ENCODE measurements at regions of chr14 and their contacts with region 1.

Region 1: GRCh38 chr14:59632381-59632780 is 55.8 kb upstream of the CCDC175 start:
- DNase-seq: no peak
- ATAC-seq: no peak
- H3K4me3 ChIP-seq: no peak overlapping the region
- H3K27ac ChIP-seq: no peak overlapping the region
- H3K4me1 ChIP-seq: peaks cover 0 to 3% of the 10 kb centered on the region in 2 donors
- H3K27me3 ChIP-seq: no peaks in the 10 kb centered on the region

Region 2: GRCh38 chr14:59688224-59689170 is 56.1 kb after region 1 on chr14:
- intact Hi-C with region 1: loop called (anchors 2 to 5 kb)
- DNase-seq: peak in 1 of 2 donors; percentile 75
- ATAC-seq: peak; percentile 75
- H3K4me3 ChIP-seq: no peak overlapping the region
- H3K27ac ChIP-seq: no peak overlapping the region
- H3K4me1 ChIP-seq: no peaks in the 10 kb centered on the region
- H3K27me3 ChIP-seq: no peaks in the 10 kb centered on the region

Region 3: GRCh38 chr14:59728321-59728720 is 95.9 kb after region 1 on chr14:
- intact Hi-C with region 1: no loop called
- DNase-seq: no peak
- ATAC-seq: no peak
- H3K4me3 ChIP-seq: no peak overlapping the region
- H3K27ac ChIP-seq: no peak overlapping the region
- H3K4me1 ChIP-seq: no peaks in the 10 kb centered on the region
- H3K27me3 ChIP-seq: no peaks in the 10 kb centered on the region

Region 4: DNA sequence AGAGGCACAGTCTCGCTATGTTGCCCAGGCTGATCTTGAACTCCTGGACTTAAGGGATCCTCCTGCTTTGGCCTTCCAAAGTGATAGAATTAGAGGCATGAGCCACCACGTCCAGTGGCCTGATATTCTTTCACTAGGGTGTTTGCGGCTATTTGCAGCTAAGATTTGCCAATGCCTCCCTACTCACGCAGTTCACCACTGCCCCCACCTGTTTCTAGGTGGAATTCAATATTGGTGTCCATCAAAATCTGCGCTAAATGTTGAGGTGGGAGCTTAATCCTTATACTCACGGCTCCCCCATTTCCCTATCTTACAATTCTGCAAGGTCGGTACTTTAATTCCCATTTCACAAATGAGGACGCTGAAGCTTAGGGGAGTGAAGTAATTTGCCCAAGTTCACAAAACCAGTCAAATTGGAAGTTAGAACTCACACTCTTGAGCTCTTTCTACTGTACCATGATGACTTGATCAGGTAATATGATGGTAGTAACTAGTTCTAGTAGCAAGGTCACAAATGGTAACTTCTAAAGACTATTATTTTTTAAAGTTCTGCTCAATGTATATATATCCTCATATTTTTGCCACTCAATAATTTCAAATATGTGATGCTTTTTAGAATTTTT is 265.5 kb after region 1 on chr14:
- intact Hi-C with region 1: loop called (anchors 5 kb)
- DNase-seq: no peak
- ATAC-seq: peak; percentile 84
- H3K4me3 ChIP-seq: no peak overlapping the region
- H3K27ac ChIP-seq: no peak overlapping the region
- H3K4me1 ChIP-seq: no peaks in the 10 kb centered on the region
- H3K27me3 ChIP-seq: no peaks in the 10 kb centered on the region

Measured in aorta (tissue), 5 donors.